CD14-positive monocyte (primary cell): ENCODE measurements at regions of chr18 and their contacts with region 1.

Region 1: GRCh38 chr18:267688-268552 is at the start of gene THOC1:
- DNase-seq: peak; percentile 90 to 94 (median 91)
- H3K4me3 ChIP-seq: peak within 1 kb of the TSS; percentile 88 to 98 (median 93)
- H3K4me3 Mint-ChIP-seq: peak within 1 kb of the TSS; percentile 95 to 96
- H3K27ac ChIP-seq: peak within 1 kb of the TSS; percentile 93 to 99
- H3K27ac Mint-ChIP-seq: peak within 1 kb of the TSS; percentile 96 to 100 (median 99)
- H3K4me1 ChIP-seq: peaks cover 15 to 20% of the 10 kb centered on the region in 2 donors
- H3K4me1 Mint-ChIP-seq: peaks cover 23% of the 10 kb centered on the region
- H3K27me3 ChIP-seq: no peaks in the 10 kb centered on the region
- H3K27me3 Mint-ChIP-seq: peaks cover 0 to 8% (median 0%) of the 10 kb centered on the region in 3 donors
- CTCF ChIP-seq: no peak
- polyA plus RNA-seq, gene THOC1: 7.8 to 18.3 (median 8.9) TPM

Region 2: DNA sequence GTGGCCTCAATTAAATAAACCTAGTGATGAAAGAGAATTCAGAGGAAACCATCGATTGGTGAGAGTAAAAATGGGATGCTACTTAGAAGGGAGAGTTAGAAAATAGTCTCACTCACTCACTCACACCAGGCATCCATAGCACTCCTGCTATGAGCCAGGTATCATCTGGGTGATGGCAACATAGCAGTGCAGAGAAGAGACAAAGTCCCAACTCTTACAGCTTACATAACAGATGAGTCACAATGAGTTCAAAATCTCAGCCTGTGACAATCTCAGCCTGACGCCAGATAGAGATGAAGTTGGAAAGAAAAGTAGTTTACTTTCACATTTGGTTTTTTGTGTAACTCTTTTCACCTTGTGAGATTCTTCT is 55.3 kb after region 1 on chr18:
- intact Hi-C with region 1: loop called in 1 of 2 experiments (anchors 5 kb)
- DNase-seq: peak; percentile 75 to 89 (median 86)
- H3K4me3 ChIP-seq: no peak overlapping the region
- H3K4me3 Mint-ChIP-seq: peak overlapping the region in 1 of 2 donors; percentile 83
- H3K27ac ChIP-seq: peak overlapping the region in 1 of 2 donors; percentile 39
- H3K27ac Mint-ChIP-seq: peak overlapping the region in 6 of 7 donors; percentile 87 to 96 (median 94)
- H3K4me1 ChIP-seq: peaks cover 22 to 25% of the 10 kb centered on the region in 2 donors
- H3K4me1 Mint-ChIP-seq: peaks cover 19% of the 10 kb centered on the region
- H3K27me3 ChIP-seq: no peaks in the 10 kb centered on the region
- H3K27me3 Mint-ChIP-seq: peaks cover 0 to 4% (median 0%) of the 10 kb centered on the region in 3 donors
- CTCF ChIP-seq: no peak

Region 3: GRCh38 chr18:577643-578375 is 309.9 kb after region 1 on chr18:
- intact Hi-C with region 1: no loop called
- DNase-seq: no peak
- H3K4me3 ChIP-seq: no peak overlapping the region
- H3K4me3 Mint-ChIP-seq: no peak overlapping the region
- H3K27ac ChIP-seq: no peak overlapping the region
- H3K27ac Mint-ChIP-seq: no peak overlapping the region
- H3K4me1 ChIP-seq: no peaks in the 10 kb centered on the region
- H3K4me1 Mint-ChIP-seq: no peaks in the 10 kb centered on the region
- H3K27me3 ChIP-seq: no peaks in the 10 kb centered on the region
- H3K27me3 Mint-ChIP-seq: peaks cover 1 to 11% (median 6%) of the 10 kb centered on the region in 3 donors
- CTCF ChIP-seq: no peak